ENCODE measurements at regions of chr14 and their contacts with region 1.

Region 1: DNA sequence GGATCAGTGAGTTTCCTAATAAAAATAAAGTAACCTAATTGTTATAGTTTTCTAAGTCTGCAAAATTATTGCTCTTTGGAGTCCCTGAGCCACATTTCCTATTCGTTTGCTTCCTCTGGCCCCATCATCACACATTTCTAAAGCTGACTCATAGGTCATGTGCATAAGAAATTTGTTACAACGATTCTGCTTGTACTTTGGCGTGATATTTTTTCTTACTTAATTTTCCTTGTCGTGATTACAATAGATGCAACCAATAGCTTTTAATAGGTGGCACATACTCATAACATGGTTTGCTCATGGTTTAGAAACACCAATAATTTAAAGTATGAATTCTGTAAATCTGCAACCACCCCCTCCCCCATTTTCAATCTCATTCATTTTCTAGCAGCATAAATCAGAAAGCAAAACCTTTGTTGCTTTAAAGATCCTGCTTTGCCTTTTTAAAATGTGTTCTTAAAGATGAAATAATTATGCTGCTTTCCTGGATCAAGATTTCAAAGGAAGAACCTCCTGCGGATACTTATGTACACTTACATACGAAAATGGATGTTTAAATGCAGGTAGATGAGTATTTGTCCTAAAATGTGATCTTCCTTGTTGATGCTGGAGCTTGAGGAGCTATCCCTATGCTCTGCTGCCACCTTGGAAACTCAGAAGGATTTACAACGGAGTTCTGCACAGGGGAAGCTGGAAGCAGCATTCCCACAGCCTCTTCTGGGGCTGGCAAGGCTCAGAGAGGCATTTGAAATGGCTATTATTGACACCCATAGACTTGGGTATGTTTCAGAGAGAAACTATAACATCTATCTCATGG is 1.7 kb upstream of the FLRT2 start:
- DNase-seq: peak; percentile 90
- ATAC-seq: peak; percentile 28
- H3K4me3 ChIP-seq: peak overlapping the region; percentile 67
- H3K27ac ChIP-seq: peak overlapping the region; percentile 81; the same call in 1 of the 2 replicates
- H3K4me1 ChIP-seq: no peaks in the 10 kb centered on the region
- H3K27me3 ChIP-seq: no peaks in the 10 kb centered on the region
- CTCF ChIP-seq: peak; percentile 81
- POLR2A ChIP-seq: no peak
- RAD21 ChIP-seq: peak; percentile 95

Region 2: DNA sequence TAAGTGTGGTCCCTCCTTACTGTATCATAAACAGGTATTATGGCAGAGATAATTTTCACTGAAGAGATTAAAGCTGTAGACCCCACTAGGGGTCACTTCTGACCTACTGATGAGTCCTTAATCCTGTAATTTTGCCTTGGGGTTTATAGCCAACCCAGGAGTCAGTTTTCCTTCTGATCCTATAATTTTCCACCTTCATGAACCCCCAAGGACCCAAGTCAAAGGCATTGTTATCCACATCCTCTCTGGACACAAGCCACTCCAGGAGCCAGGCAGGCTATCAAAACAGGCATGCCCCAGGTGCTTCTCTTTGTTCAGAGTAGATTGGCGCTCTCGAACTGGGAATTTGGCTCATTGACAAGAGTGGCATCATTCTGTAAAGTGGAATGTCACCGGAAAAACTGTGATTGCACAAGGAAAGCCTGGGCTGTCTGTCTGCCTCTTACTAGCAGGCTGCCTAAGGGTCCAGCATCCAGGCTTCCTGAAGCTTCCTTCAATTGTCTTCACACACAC is 1521.6 kb before region 1 on chr14:
- CTCF ChIA-PET with region 1: no interaction called
- POLR2A ChIA-PET with region 1: no interaction called
- dilution Hi-C with region 1: no loop called
- in situ Hi-C with region 1: no loop called
- intact Hi-C with region 1: loop called (anchors 5 kb)
- DNase-seq: no peak
- ATAC-seq: no peak
- H3K4me3 ChIP-seq: no peak overlapping the region
- H3K27ac ChIP-seq: no peak overlapping the region
- H3K4me1 ChIP-seq: no peaks in the 10 kb centered on the region
- H3K27me3 ChIP-seq: no peaks in the 10 kb centered on the region
- CTCF ChIP-seq: 0 out of 2 replicates have a peak, but pooled peaks have one; percentile 1
- POLR2A ChIP-seq: no peak
- RAD21 ChIP-seq: no peak

Region 3: GRCh38 chr14:84482256-84483066 is 1045.8 kb before region 1 on chr14:
- CTCF ChIA-PET with region 1: no interaction called
- POLR2A ChIA-PET with region 1: interaction called, 3 read pairs
- dilution Hi-C with region 1: no loop called
- in situ Hi-C with region 1: no loop called
- intact Hi-C with region 1: loop called (anchors 5 kb)
- DNase-seq: peak; percentile 75
- ATAC-seq: peak; percentile 91
- H3K4me3 ChIP-seq: no peak overlapping the region
- H3K27ac ChIP-seq: peak overlapping the region; percentile 56; the same call in 1 of the 2 replicates
- H3K4me1 ChIP-seq: no peaks in the 10 kb centered on the region; the same call in 1 of the 2 replicates
- H3K27me3 ChIP-seq: no peaks in the 10 kb centered on the region
- CTCF ChIP-seq: no peak
- POLR2A ChIP-seq: no peak
- RAD21 ChIP-seq: no peak

Region 4: DNA sequence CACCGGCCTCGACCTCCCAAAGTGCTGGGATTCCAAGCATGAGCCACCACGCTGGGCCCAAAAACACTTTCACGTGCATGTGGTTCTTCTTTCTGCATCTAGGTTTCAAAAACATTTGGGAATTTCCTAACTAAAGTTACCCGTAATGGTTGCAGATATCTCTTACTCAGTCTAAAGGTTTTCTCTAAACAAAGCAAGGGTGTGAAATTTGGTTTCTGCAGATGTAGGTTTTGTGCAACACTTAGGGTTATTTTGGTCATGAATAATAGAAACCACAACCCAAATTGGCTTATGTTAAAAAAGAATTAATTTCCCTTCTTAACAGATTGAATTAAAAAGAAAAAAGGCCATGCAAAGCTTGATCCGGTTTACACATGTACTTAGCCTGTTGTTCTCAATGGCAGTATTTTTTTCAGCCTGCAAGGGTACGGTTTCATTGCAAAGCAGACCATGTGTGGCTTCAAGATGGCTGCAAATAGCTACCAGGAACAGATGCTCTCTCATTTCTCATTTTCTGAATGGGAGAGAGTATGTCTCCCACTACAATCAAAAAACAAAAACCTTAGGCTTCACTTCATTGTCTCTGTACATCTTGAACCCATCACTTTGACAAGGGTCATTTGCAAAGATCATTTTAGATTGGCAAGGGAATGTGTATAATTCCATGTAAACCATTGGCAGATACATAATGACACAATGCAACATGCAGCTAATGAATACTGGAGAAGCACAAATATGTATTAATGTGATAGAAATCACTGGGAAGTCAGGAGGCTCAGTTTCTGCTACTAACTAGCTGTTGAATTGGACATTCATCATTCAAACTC is 489.5 kb before region 1 on chr14:
- CTCF ChIA-PET with region 1: no interaction called
- POLR2A ChIA-PET with region 1: no interaction called
- dilution Hi-C with region 1: no loop called
- in situ Hi-C with region 1: no loop called
- intact Hi-C with region 1: loop called (anchors 10 kb)
- DNase-seq: no peak
- ATAC-seq: no peak
- H3K4me3 ChIP-seq: no peak overlapping the region
- H3K27ac ChIP-seq: no peak overlapping the region
- H3K4me1 ChIP-seq: no peaks in the 10 kb centered on the region
- H3K27me3 ChIP-seq: no peaks in the 10 kb centered on the region
- CTCF ChIP-seq: no peak
- POLR2A ChIP-seq: no peak
- RAD21 ChIP-seq: no peak

Region 5: GRCh38 chr14:85415015-85415712 is 113.1 kb before region 1 on chr14:
- CTCF ChIA-PET with region 1: no interaction called
- POLR2A ChIA-PET with region 1: no interaction called
- dilution Hi-C with region 1: no loop called
- in situ Hi-C with region 1: no loop called
- intact Hi-C with region 1: loop called (anchors 5 kb)
- DNase-seq: peak; percentile 93
- ATAC-seq: peak; percentile 91
- H3K4me3 ChIP-seq: no peak overlapping the region
- H3K27ac ChIP-seq: no peak overlapping the region
- H3K4me1 ChIP-seq: 0 out of 2 replicates have a peak, but pooled peaks cover 2% of the 10 kb centered on the region
- H3K27me3 ChIP-seq: no peaks in the 10 kb centered on the region
- CTCF ChIP-seq: peak; percentile 34
- POLR2A ChIP-seq: no peak
- RAD21 ChIP-seq: peak; percentile 46

Region 6: GRCh38 chr14:87334997-87335685 is 1806.9 kb after region 1 on chr14:
- CTCF ChIA-PET with region 1: no interaction called
- POLR2A ChIA-PET with region 1: no interaction called
- dilution Hi-C with region 1: no loop called
- in situ Hi-C with region 1: no loop called
- intact Hi-C with region 1: loop called (anchors 10 kb)
- DNase-seq: no peak
- ATAC-seq: no peak
- H3K4me3 ChIP-seq: no peak overlapping the region
- H3K27ac ChIP-seq: no peak overlapping the region
- H3K4me1 ChIP-seq: no peaks in the 10 kb centered on the region; the same call in 1 of the 2 replicates
- H3K27me3 ChIP-seq: no peaks in the 10 kb centered on the region
- CTCF ChIP-seq: 0 out of 2 replicates have a peak, but pooled peaks have one; percentile 7
- POLR2A ChIP-seq: no peak
- RAD21 ChIP-seq: no peak